ENCODE measurements at regions of chr3 and their contacts with region 1.

Region 1: DNA sequence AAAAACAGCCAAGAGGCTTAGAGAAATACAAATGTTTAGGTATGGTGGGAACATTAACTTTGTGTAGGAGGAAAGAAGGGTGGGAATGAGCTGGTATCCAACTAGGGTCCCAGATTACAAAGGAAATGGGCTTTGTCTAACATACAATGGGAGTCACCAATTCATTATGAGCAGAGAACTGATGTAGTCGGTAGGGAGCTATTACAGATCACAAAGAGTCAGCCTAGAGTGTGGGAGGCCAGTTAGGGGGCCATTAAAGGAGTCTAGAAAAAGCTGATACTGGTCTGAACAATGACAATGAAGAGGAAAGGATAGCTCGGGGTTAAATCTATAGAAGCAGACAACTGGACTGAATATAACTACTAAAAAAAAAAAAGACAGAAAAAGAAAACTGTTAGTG is 15.5 kb downstream of the ANO10 start:
- DNase-seq: no peak
- H3K4me3 ChIP-seq: no peak overlapping the region
- H3K27ac ChIP-seq: no peak overlapping the region
- H3K4me1 ChIP-seq: peaks cover 0 to 11% (median 3%) of the 10 kb centered on the region in 4 donors
- H3K27me3 ChIP-seq: no peaks in the 10 kb centered on the region
- CTCF ChIP-seq: no peak
- EP300 ChIP-seq: no peak
- POLR2A ChIP-seq: no peak

Region 2: GRCh38 chr3:43629257-43629656 is 23.0 kb after region 1 on chr3:
- in situ Hi-C with region 1: no loop called
- intact Hi-C with region 1: loop called (anchors 1 kb)
- DNase-seq: no peak
- H3K4me3 ChIP-seq: no peak overlapping the region
- H3K27ac ChIP-seq: no peak overlapping the region
- H3K4me1 ChIP-seq: no peaks in the 10 kb centered on the region
- H3K27me3 ChIP-seq: no peaks in the 10 kb centered on the region
- CTCF ChIP-seq: no peak
- EP300 ChIP-seq: no peak
- POLR2A ChIP-seq: no peak

Measured in transverse colon (tissue), 4 donors.